Activated CD4-positive, alpha-beta memory T cell treated with anti-CD3 and anti-CD28 coated beads for 36 hours (primary cell): ENCODE measurements at regions of chr2 and their contacts with region 1.

Region 1: DNA sequence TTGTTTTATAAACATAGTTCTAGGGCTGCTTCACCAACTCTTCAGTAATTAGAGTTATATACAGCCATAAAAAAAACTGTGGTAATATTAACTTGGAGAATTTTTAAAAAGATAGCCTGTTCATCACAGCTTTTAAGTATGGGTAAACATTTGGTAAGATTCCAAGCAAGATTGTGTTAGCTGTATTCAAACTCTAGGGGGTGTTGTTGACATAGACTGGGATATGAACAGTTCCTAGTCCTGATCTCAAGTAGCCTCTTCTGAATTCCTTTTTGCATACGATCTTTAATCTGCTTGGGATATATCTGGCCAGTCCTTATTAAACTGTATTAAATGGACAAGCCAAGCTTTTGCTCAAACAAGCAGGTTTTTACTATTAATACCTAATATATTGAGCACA is 13.4 kb downstream of the NOP58 start:
- DNase-seq: no peak
- H3K4me3 Mint-ChIP-seq: no peak overlapping the region
- H3K27ac Mint-ChIP-seq: peak overlapping the region; percentile 89
- H3K4me1 Mint-ChIP-seq: peaks cover 60% of the 10 kb centered on the region
- H3K27me3 Mint-ChIP-seq: no peaks in the 10 kb centered on the region

Region 2: DNA sequence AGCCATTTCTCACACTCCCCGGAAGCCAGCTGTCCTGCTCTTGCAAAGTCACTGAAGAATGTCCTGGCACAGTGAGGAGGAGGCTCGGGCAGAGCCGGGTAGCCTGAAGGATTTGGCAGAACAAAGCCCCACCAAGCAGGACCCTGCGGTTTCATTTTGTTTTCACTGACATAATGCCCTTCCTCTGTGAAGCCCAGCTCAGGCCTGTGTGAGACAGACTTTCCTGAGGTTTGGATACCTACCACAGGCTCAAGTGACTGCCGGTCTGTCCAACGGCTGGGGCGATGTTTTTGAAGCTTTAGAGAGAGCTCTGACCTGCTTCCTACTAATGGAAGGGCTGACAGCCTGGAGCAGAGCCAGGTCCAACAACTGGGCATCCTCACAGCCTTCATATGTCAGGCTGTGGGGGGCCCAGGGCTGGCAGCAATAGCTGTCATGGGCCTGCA is 345.1 kb before region 1 on chr2:
- CTCF ChIA-PET with region 1: no interaction called
- POLR2A ChIA-PET with region 1: no interaction called
- intact Hi-C with region 1: no loop called
- DNase-seq: no peak
- H3K4me3 Mint-ChIP-seq: no peak overlapping the region
- H3K27ac Mint-ChIP-seq: no peak overlapping the region
- H3K4me1 Mint-ChIP-seq: no peaks in the 10 kb centered on the region
- H3K27me3 Mint-ChIP-seq: peaks cover 4% of the 10 kb centered on the region

Region 3: GRCh38 chr2:202238234-202239197 is 40.4 kb before region 1 on chr2 and contains the start of gene SUMO1:
- CTCF ChIA-PET with region 1: no interaction called
- POLR2A ChIA-PET with region 1: no interaction called
- intact Hi-C with region 1: loop called (anchors 1 kb)
- DNase-seq: peak; percentile 97
- H3K4me3 Mint-ChIP-seq: peak within 1 kb of the TSS; percentile 98
- H3K27ac Mint-ChIP-seq: peak within 1 kb of the TSS; percentile 95
- H3K4me1 Mint-ChIP-seq: peaks cover 23% of the 10 kb centered on the region
- H3K27me3 Mint-ChIP-seq: peaks cover 1% of the 10 kb centered on the region
- total RNA-seq, gene SUMO1: 114 to 119 TPM

Region 4: GRCh38 chr2:202265467-202266277 is 13.3 kb before region 1 on chr2 and contains the start of gene NOP58:
- CTCF ChIA-PET with region 1: interaction called, 17 read pairs
- POLR2A ChIA-PET with region 1: interaction called, 134 read pairs
- intact Hi-C with region 1: loop called (anchors 1 kb)
- DNase-seq: peak; percentile 96
- H3K4me3 Mint-ChIP-seq: peak within 1 kb of the TSS; percentile 49
- H3K27ac Mint-ChIP-seq: peak within 1 kb of the TSS; percentile 70
- H3K4me1 Mint-ChIP-seq: peaks cover 19% of the 10 kb centered on the region
- H3K27me3 Mint-ChIP-seq: no peaks in the 10 kb centered on the region
- total RNA-seq, gene NOP58: 151 to 155 TPM

Region 5: DNA sequence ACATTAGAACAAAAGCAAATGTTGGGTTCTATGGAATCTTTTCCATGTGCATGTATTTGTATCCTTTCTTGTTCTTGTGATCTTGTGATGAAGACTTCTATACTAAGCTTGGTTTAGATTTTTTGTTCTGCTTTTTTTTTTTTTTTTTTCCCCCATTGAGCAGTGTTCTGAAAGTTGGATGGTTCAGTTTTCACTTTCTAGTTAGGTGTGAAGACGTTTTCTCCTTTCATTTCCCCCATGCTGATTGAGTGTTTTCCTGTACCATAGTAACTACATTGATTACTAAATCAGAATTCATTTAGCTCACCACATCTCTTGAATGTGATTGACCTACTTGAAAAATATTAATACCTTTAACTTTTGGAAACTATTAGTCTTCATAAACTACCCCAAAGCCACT is 20.8 kb after region 1 on chr2:
- CTCF ChIA-PET with region 1: interaction called, 4 read pairs
- POLR2A ChIA-PET with region 1: interaction called, 12 read pairs
- intact Hi-C with region 1: loop called (anchors 1 kb)
- DNase-seq: no peak
- H3K4me3 Mint-ChIP-seq: no peak overlapping the region
- H3K27ac Mint-ChIP-seq: peak overlapping the region; percentile 69
- H3K4me1 Mint-ChIP-seq: peaks cover 39% of the 10 kb centered on the region
- H3K27me3 Mint-ChIP-seq: no peaks in the 10 kb centered on the region

Region 6: GRCh38 chr2:202375609-202376408 is 96.9 kb after region 1 on chr2 and contains the start of gene BMPR2:
- CTCF ChIA-PET with region 1: no interaction called
- POLR2A ChIA-PET with region 1: no interaction called
- intact Hi-C with region 1: loop called (anchors 5 kb)
- DNase-seq: peak; percentile 88
- H3K4me3 Mint-ChIP-seq: peak within 1 kb of the TSS; percentile 98
- H3K27ac Mint-ChIP-seq: peak within 1 kb of the TSS; percentile 80
- H3K4me1 Mint-ChIP-seq: peaks cover 24% of the 10 kb centered on the region
- H3K27me3 Mint-ChIP-seq: no peaks in the 10 kb centered on the region
- total RNA-seq, gene BMPR2: 8.2 to 8.7 TPM

Region 7: GRCh38 chr2:203014456-203015199 is 735.7 kb after region 1 on chr2 and contains the start of gene NBEAL1:
- CTCF ChIA-PET with region 1: no interaction called
- POLR2A ChIA-PET with region 1: no interaction called
- intact Hi-C with region 1: loop called (anchors 10 kb)
- DNase-seq: peak; percentile 98
- H3K4me3 Mint-ChIP-seq: peak within 1 kb of the TSS; percentile 94
- H3K27ac Mint-ChIP-seq: peak within 1 kb of the TSS; percentile 90
- H3K4me1 Mint-ChIP-seq: peaks cover 31% of the 10 kb centered on the region
- H3K27me3 Mint-ChIP-seq: no peaks in the 10 kb centered on the region
- total RNA-seq, gene NBEAL1: 10.6 to 11.6 TPM

Region 8: DNA sequence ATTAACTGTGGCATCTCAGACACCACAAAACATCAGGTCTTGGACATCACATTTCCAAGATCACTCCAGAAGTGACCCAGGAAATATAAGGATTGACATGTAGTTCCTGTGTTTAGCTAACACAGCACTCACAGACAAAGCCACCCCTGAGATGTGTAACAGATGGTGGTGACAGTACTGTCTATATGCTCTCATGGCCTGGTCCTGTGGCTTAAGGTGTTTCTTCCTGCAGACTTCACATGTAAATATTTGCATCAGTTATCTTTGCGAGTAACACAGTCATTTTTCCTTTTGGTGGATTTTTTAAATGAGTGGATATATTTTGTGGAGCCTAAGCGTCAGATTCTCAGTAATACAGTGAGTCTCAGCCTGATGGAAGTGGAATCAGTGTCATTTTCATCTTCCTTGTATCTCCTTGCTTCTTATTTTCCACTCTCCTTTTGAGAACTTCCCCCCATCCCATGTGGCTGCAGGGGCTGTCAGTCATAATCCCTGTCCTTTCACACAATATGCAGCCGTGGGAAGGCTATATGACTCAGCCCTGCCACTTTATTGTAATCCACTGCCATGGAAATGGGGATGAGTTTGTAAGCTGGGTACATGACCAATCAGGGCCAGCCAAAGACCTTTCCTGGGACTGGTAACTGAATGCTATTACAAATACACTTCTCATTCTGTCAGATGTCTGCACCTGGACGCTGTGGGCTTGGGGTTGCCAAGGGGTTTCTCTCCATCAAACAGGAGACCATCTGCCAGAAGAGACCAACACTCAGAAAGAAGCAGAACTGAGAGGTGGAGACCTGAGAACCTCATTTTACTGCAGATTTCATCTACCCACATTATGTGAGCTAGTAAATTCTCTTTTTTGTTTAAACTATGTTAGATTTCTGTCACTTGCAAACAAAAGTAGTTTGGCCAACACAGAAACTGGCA is 1732.0 kb after region 1 on chr2:
- CTCF ChIA-PET with region 1: no interaction called
- POLR2A ChIA-PET with region 1: no interaction called
- intact Hi-C with region 1: loop called (anchors 10 kb)
- DNase-seq: peak; percentile 49
- H3K4me3 Mint-ChIP-seq: peak overlapping the region; percentile 56
- H3K27ac Mint-ChIP-seq: peak overlapping the region; percentile 78
- H3K4me1 Mint-ChIP-seq: peaks cover 87% of the 10 kb centered on the region
- H3K27me3 Mint-ChIP-seq: no peaks in the 10 kb centered on the region